KBM-7 (cell line): ENCODE measurements at regions of chr12 and their contacts with region 1.

Region 1: DNA sequence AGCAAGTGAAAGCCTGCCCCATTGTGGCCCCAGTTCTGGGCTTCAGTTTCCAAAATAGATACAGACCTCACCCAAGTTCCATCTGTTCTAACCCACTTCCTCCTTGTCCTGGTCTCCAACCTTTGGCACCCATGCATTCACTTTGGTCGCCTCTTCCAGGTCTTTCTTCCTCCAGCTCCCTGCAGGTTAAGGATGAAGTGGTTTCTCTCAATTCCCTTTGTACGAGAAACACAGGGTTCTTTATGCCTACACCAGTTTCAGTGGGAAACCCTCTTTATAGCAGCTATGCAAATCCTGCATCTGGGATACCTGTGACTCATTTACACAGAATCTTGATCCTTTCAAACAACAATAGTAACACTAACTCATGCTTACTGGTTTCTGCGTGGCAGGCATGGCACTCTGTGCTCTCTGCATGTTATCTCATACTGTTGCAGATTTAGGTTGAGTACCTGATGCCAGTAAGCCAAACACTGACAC is 110.6 kb upstream of the AMIGO2 start:
- DNase-seq: peak; percentile 54

Region 2: DNA sequence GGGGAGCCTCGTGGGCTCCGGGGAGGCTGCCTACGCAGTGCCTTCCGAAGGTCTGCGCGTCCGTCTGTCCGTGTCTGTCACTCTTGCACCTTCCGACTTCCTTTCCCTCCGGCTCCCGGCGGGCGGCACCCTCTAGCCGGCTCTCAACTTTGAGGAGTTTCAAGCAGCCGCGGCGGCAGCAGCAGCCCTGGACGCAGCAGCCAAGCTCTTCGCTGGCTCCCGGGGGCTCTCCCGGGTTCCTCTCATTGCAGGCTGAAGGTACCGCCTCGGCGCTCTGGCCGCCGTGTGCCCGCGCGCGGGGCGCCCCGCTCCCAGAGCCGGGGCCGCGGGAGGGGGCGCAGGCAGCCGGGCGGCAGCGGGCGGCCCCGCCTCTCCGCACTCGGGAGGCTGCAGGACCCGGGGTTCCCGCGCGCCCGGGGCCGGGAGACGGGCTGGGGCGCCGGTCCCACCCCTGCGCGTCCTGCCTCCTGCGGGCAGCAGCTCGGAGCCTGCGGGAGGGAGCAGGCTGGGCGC is 110.8 kb before region 1 on chr12 and contains the starts of genes AMIGO2 and PCED1B:
- in situ Hi-C with region 1: loop called (anchors 25 kb)
- DNase-seq: peak; percentile 79